Pancreas (tissue), 10 donors: ENCODE measurements at regions of chr16 and their contacts with region 1.

Region 1: DNA sequence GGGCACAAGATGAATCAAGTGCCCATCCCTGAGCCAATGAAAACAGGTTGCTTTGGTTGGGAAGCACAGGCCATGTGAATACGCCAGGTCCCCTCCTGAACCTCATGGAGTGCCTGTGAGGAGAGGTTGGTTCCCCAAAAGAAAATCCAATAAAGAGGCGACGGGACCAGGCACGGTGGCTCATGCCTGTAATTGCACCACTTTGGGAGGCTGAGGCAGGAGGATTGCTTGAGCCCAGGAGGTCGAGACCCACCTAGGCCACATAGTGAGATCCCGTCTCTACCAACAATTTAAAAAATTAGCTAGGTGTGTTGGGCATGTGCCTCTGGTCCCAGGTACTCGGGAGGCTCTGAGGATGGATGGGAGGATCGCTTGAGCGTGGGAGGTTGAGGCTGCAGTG is 3.5 kb upstream of the CORO1A start:
- DNase-seq: no peak
- ATAC-seq: no peak
- H3K4me3 ChIP-seq: no peak overlapping the region
- H3K27ac ChIP-seq: no peak overlapping the region
- H3K4me1 ChIP-seq: no peaks in the 10 kb centered on the region
- H3K27me3 ChIP-seq: no peaks in the 10 kb centered on the region
- CTCF ChIP-seq: no peak

Region 2: DNA sequence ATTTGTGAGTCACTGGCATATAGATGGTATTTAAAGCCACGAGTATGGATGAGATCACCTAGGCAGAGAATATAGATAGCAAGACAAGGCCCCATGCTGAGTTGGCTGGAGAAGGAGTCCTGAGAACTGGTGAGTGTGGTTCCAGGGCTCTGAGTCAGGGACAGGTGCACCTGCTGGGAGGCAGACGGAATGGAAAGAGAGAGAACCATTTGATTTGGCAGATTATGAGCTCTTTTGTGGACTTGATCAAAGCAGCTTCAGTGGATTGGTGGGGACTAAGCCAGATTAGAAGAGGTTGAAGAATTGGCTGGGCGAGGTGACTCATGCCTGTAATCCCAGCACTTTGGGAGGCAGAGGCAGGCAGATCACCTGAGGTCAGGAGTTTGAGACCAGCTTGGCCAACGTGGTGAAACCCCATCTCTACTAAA is 161.2 kb before region 1 on chr16:
- intact Hi-C with region 1: no loop called
- DNase-seq: no peak
- ATAC-seq: no peak
- H3K4me3 ChIP-seq: no peak overlapping the region
- H3K27ac ChIP-seq: no peak overlapping the region
- H3K4me1 ChIP-seq: no peaks in the 10 kb centered on the region
- H3K27me3 ChIP-seq: no peaks in the 10 kb centered on the region
- CTCF ChIP-seq: no peak

Region 3: DNA sequence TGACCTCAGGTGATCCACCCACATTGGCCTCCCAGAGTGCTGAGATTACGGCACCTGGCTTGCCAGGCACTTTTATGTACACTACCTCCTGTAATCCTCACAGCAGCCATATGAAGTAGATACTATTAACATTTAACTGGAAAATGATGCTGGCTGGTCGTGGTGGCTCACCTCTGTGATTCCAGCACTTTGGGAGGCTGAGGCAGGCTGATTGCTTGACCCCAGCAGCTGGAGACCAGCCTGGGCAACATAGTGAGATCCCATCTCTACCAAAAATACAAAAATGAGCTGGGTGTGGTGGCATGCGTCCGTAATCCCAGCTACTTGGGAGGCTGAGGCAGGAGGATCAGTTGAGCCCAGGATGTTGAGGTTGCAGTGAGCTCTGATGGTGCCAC is 54.9 kb before region 1 on chr16:
- intact Hi-C with region 1: loop called in 1 of 3 experiments (anchors 5 kb)
- DNase-seq: peak in 1 of 6 donors; percentile 10
- ATAC-seq: no peak
- H3K4me3 ChIP-seq: no peak overlapping the region
- H3K27ac ChIP-seq: no peak overlapping the region
- H3K4me1 ChIP-seq: peaks cover 0 to 3% (median 0%) of the 10 kb centered on the region in 3 donors
- H3K27me3 ChIP-seq: no peaks in the 10 kb centered on the region
- CTCF ChIP-seq: no peak